ENCODE measurements at regions of chr6 and their contacts with region 1.

Region 1: DNA sequence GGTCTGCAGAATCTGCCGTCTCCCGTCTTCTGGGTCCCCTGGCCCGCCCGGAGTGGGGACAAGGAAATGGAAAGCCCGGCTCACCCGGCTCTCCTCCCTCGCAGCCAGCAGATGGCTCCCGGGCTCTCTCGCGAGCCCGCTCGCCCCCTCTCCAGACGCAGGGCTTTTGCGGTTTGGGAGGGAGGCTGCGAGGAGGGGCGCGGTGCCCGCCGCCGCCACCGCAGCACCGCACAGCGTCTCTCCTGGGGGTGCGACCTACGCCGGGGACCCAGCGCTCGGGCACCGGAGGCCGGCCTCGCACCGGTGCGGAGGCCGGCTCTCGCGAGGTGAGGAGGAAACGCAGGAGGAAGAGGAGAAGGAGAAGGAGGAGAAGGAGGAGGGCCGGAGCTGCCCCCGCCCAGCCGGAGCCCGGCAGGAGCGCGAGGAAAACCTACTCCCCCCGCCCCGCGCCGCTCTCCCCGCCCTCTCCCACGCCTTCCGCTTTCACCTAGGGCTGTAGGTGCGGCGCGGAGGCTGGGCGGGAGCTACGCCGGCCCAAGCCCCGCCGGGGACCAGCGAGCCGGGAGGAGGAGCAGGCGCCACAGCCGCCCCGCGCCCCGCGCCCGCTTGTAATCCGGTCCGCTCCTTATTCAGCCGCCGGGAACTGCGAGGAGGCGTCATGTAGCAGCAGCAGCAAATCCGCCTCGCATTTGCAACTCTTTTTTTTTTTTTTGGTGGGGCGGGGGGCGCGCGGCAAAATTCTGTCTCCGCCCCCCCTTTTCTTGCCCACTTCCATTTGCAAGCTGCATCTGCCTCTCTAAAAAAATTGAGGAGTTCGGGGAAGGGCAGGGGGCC is at the start of gene CARMIL1:
- DNase-seq: peak; percentile 62
- ATAC-seq: peak; percentile 82
- H3K4me3 Mint-ChIP-seq: peak within 1 kb of the TSS; percentile 87
- H3K27ac Mint-ChIP-seq: peak within 1 kb of the TSS; percentile 65
- H3K4me1 Mint-ChIP-seq: peaks cover 34% of the 10 kb centered on the region
- H3K27me3 Mint-ChIP-seq: no peaks in the 10 kb centered on the region
- CTCF ChIP-seq: no peak
- total RNA-seq, gene CARMIL1: 3.4 and 3.6 TPM in 2 replicates

Region 2: DNA sequence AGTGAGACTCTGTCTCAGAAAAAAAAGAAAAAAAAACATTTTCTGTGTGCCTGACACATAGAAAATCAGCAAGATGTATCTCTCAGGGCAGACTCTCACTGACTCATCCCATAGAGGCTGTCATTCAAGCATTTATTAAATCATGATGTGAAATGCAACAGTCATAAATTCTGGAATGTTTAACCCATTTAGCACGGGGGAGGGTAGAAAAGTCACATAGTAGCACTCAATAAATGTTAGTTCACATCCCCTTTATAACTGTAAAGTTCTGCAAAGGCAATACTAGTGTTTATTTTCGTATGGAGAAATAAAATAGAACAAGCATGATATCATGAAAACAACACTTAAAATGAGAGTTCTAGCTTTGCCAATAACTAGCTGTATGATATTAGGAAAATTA is 15.5 kb before region 1 on chr6:
- CTCF ChIA-PET with region 1: interaction called, 37 read pairs
- POLR2A ChIA-PET with region 1: no interaction called
- intact Hi-C with region 1: loop called (anchors 1 kb)
- DNase-seq: no peak
- ATAC-seq: no peak
- H3K4me3 Mint-ChIP-seq: no peak overlapping the region
- H3K27ac Mint-ChIP-seq: no peak overlapping the region
- H3K4me1 Mint-ChIP-seq: peaks cover 2% of the 10 kb centered on the region
- H3K27me3 Mint-ChIP-seq: peaks cover 5% of the 10 kb centered on the region
- CTCF ChIP-seq: no peak

Region 3: DNA sequence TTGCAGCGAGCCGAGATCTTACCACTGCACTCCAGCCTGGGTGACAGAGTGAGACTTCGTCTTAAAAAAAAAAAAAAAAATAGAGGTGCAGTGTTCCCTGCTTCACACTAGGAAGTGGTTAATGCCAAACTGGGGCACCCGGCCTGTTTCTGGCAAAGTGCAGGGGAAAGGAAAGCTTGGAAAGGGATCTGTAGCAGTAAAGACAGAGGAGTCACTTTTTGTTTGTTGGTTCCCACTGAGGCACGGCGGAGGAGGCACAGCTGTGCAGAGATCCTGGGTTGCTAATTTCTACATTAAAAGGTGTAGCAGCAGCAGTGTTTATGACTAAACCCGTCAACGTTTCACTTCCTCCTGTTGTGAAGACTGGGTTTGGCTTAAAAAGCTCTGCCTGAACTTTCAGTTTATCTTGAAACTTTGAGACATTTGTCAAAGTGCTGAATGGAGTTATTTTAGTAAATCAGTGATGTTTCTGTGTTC is 125.6 kb after region 1 on chr6:
- CTCF ChIA-PET with region 1: interaction called, 14 read pairs
- POLR2A ChIA-PET with region 1: interaction called, 7 read pairs
- intact Hi-C with region 1: loop called (anchors 2 kb)
- DNase-seq: peak; percentile 46
- ATAC-seq: peak; percentile 91
- H3K4me3 Mint-ChIP-seq: no peak overlapping the region
- H3K27ac Mint-ChIP-seq: no peak overlapping the region
- H3K4me1 Mint-ChIP-seq: peaks cover 15% of the 10 kb centered on the region
- H3K27me3 Mint-ChIP-seq: no peaks in the 10 kb centered on the region
- CTCF ChIP-seq: no peak

Region 4: GRCh38 chr6:25556516-25556915 is 277.4 kb after region 1 on chr6:
- CTCF ChIA-PET with region 1: interaction called, 29 read pairs
- POLR2A ChIA-PET with region 1: interaction called, 3 read pairs
- intact Hi-C with region 1: no loop called
- DNase-seq: peak; percentile 47
- ATAC-seq: peak; percentile 47
- H3K4me3 Mint-ChIP-seq: no peak overlapping the region
- H3K27ac Mint-ChIP-seq: no peak overlapping the region
- H3K4me1 Mint-ChIP-seq: peaks cover 9% of the 10 kb centered on the region
- H3K27me3 Mint-ChIP-seq: no peaks in the 10 kb centered on the region
- CTCF ChIP-seq: peak; percentile 90

Region 5: GRCh38 chr6:25962149-25963127 is 683.3 kb after region 1 on chr6 and contains the start of gene TRIM38:
- CTCF ChIA-PET with region 1: no interaction called
- POLR2A ChIA-PET with region 1: no interaction called
- intact Hi-C with region 1: loop called (anchors 1 kb)
- DNase-seq: peak; percentile 30
- ATAC-seq: peak; percentile 82
- H3K4me3 Mint-ChIP-seq: peak within 1 kb of the TSS; percentile 94
- H3K27ac Mint-ChIP-seq: peak within 1 kb of the TSS; percentile 95
- H3K4me1 Mint-ChIP-seq: peaks cover 87% of the 10 kb centered on the region
- H3K27me3 Mint-ChIP-seq: no peaks in the 10 kb centered on the region
- CTCF ChIP-seq: no peak
- total RNA-seq, gene TRIM38: 31.7 and 36.8 TPM in 2 replicates

Measured in activated B cell treated with CpG ODN at 0.5 μM for 24 hours (primary cell).